ENCODE measurements at regions of chr12 and their contacts with region 1.

Region 1: DNA sequence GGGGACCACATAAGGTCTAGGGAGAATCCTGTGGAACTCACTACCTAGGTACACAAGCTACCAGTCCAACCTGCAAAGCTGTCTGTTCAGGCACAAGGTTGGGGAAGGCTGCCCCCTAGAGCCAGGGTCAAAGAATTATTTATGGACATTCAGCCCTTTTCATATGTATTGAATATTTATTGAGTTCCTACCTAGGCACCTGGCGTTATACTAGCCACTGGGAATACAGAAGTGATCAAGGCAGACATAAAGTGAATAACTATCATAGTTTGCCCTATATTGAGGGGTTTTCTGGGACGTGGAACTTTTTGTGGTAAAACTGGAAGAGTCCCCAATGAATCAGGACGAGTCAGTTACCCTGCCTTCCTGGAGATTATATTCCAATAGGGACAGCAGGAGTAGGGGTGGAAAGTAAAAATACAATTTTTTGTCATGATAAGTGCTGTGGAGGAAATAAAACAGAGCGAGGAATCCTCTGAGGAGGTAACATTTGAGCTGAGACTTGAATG is 5.8 kb upstream of the SLC48A1 start:
- DNase-seq: peak; percentile 17 to 80 (median 58)
- ATAC-seq: peak; percentile 49 to 78 (median 72)
- H3K4me3 ChIP-seq: no peak overlapping the region
- H3K4me3 Mint-ChIP-seq: no peak overlapping the region
- H3K27ac ChIP-seq: no peak overlapping the region
- H3K27ac Mint-ChIP-seq: peak overlapping the region; percentile 32 to 34
- H3K4me1 ChIP-seq: peaks cover 0 to 15% of the 10 kb centered on the region in 2 experiments
- H3K4me1 Mint-ChIP-seq: peaks cover 2 to 19% (median 13%) of the 10 kb centered on the region in 3 donors
- H3K27me3 ChIP-seq: peaks cover 0 to 13% of the 10 kb centered on the region in 2 experiments
- H3K27me3 Mint-ChIP-seq: no peaks in the 10 kb centered on the region

Region 2: DNA sequence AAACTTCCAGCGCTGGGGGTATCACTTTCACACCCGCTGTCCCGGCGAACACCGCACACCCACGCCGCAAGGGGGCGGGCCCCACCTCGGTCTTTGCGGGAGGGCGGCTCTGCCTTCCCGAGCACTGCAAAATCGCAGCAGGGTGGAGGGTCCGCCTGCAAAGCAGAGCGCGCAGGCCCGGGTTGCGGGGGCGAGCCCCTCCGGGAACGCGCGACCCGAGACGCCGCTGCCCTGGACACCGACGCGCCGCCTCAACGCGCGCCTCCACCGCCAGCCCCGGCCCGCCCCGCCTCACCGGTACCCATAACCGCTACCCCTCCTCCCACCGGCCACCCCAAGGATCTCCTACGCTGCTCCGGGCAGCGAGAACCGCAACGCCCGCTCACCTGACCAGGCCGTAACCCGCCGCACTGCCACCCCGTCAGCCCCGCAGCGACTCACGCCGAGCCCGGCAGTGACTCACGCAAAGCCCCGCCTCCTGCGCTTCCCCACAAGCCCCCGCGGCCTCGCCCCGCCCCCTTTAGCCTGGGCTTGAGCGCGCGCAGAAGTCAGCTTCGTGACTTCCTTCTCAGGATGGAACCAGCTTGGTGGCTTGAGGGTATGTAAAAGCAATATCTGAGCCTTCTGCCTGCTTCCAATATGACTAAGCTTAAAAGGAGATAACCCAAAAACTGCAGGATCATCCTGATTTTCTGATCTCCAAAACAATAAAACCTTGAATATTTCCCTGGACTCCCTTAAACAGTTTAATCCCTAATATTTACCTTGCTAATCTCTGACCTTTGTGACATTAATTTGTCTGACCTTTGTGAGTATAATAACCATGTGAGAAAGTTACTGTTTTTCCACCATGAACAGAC is 61.5 kb before region 1 on chr12 and contains the start of gene RPAP3:
- CTCF ChIA-PET with region 1: interaction called in 1 of 2 experiments, 10 read pairs
- POLR2A ChIA-PET with region 1: no interaction called
- DNase-seq: peak; percentile 90 to 98 (median 95)
- ATAC-seq: peak; percentile 95 to 98 (median 96)
- H3K4me3 ChIP-seq: peak within 1 kb of the TSS; percentile 56 to 67
- H3K4me3 Mint-ChIP-seq: peak within 1 kb of the TSS; percentile 95 to 97 (median 97)
- H3K27ac ChIP-seq: peak within 1 kb of the TSS; percentile 67
- H3K27ac Mint-ChIP-seq: peak within 1 kb of the TSS; percentile 95 to 99
- H3K4me1 ChIP-seq: peaks cover 27 to 29% of the 10 kb centered on the region in 2 experiments
- H3K4me1 Mint-ChIP-seq: peaks cover 47 to 59% (median 47%) of the 10 kb centered on the region in 3 donors
- H3K27me3 ChIP-seq: no peaks in the 10 kb centered on the region
- H3K27me3 Mint-ChIP-seq: no peaks in the 10 kb centered on the region
- total RNA-seq, gene RPAP3: 24.0 to 33.5 (median 29.4) TPM

Region 3: GRCh38 chr12:47715393-47715876 is 51.8 kb before region 1 on chr12:
- CTCF ChIA-PET with region 1: interaction called, 11 to 13 read pairs
- POLR2A ChIA-PET with region 1: interaction called in 1 of 2 experiments, 3 read pairs
- DNase-seq: peak; percentile 54 to 92 (median 76)
- ATAC-seq: peak; percentile 74 to 88 (median 82)
- H3K4me3 ChIP-seq: no peak overlapping the region
- H3K4me3 Mint-ChIP-seq: peak overlapping the region in 1 of 3 donors; percentile 7
- H3K27ac ChIP-seq: no peak overlapping the region
- H3K27ac Mint-ChIP-seq: peak overlapping the region; percentile 57 to 69
- H3K4me1 ChIP-seq: peaks cover 7 to 20% of the 10 kb centered on the region in 2 experiments
- H3K4me1 Mint-ChIP-seq: peaks cover 24 to 31% (median 27%) of the 10 kb centered on the region in 3 donors
- H3K27me3 ChIP-seq: no peaks in the 10 kb centered on the region
- H3K27me3 Mint-ChIP-seq: no peaks in the 10 kb centered on the region

Region 4: DNA sequence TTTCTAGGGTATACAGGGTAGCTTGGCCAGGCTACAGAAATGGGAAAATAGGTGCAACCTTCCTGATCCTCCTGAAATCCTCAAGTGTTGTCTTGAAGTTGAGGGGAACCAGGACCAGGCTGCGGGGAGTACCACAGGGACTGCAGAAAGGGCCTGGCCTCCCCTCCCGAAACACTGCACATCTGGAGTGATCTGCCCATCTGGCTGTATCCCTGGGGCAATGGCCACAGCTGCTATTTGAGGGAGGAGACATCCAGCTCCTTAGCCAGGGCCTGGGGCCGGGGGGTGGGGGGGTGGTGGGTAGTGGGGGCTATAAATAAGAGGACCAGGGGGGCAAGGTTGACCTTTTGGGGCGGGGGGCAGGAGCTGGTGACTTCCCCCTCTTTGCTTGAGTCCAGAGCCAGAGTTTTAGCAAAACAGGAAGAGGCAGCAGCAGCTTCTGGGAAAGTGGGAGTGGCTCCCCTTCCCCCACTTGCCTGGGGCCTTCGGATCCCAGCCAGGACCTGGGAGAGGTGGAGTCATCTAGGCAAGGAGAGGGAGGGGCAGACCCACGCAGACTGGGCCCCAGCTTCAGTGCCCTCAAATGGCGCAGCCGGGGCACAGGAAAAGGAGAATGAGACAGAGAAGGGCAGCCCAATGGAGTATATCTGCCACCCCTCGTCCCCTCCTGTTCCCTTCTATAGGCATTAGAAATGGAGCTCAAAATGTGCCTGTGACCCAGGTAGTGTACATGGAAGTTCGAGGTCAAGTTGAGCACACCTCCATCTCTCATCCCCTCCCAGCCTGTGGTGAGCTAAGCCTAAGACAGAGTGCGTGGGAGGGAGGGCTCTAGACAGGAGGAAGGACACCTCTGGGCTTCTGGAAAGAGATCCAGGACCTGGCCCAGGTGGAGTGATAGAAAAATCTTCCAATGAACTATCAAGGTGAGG is 61.6 kb after region 1 on chr12:
- CTCF ChIA-PET with region 1: no interaction called
- POLR2A ChIA-PET with region 1: no interaction called
- DNase-seq: no peak
- ATAC-seq: no peak
- H3K4me3 ChIP-seq: no peak overlapping the region
- H3K4me3 Mint-ChIP-seq: peak overlapping the region in 1 of 3 donors; percentile 60
- H3K27ac ChIP-seq: peak overlapping the region; percentile 22
- H3K27ac Mint-ChIP-seq: peak overlapping the region; percentile 82 to 87
- H3K4me1 ChIP-seq: peaks cover 81 to 95% of the 10 kb centered on the region in 2 experiments
- H3K4me1 Mint-ChIP-seq: peaks cover 90 to 92% (median 91%) of the 10 kb centered on the region in 3 donors
- H3K27me3 ChIP-seq: no peaks in the 10 kb centered on the region
- H3K27me3 Mint-ChIP-seq: no peaks in the 10 kb centered on the region